ENCODE measurements at regions of chr9 and their contacts with region 1.

Region 1: DNA sequence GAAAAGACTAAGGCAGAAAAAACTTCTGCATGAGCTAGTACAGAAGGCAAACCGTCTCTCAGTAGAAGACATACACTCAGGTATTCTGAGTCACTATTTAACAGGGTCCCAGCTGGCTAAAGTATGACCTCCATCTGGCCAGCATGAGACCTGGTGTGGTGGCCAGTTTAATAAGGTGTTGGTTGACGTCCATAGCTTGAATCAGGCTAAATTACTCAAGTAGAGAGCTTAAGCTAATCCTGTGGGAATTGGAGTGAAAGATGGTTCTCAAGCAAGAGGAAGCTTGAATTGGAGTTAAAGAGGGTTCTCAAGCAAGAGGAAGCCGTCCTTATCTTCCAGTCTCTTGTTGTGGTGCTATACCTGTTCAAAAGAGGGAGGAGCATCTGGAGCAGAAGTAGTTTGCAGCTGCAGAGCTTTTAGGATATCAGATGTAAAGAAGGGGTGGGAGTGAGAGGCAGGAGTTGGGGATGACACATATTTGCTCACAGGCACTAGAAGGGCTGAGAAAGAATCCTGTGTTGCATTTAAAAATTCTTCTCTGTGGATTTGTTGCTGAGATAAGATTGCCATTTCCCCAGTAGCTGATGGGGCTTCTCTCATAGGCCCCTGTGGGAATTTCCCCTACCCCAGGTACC is 136.1 kb upstream of the RUSC2 start:
- DNase-seq: no peak
- H3K4me3 ChIP-seq: no peak overlapping the region
- H3K27ac ChIP-seq: no peak overlapping the region
- H3K4me1 ChIP-seq: no peaks in the 10 kb centered on the region
- H3K27me3 ChIP-seq: no peaks in the 10 kb centered on the region
- CTCF ChIP-seq: no peak
- EP300 ChIP-seq: no peak
- POLR2A ChIP-seq: no peak
- RAD21 ChIP-seq: no peak

Region 2: GRCh38 chr9:35116898-35117551 is 236.8 kb before region 1 on chr9:
- CTCF ChIA-PET with region 1: interaction called, 12 read pairs
- POLR2A ChIA-PET with region 1: no interaction called
- DNase-seq: peak; percentile 83 to 87
- H3K4me3 ChIP-seq: peak overlapping the region; percentile 49 to 79 (median 65); a peak in 7 of 8 replicates
- H3K27ac ChIP-seq: no peak overlapping the region
- H3K4me1 ChIP-seq: peaks cover 4 to 19% (median 10%) of the 10 kb centered on the region in 4 experiments; a peak in 6 of 7 replicates
- H3K27me3 ChIP-seq: no peaks in the 10 kb centered on the region
- CTCF ChIP-seq: peak; percentile 90 to 98 (median 90)
- EP300 ChIP-seq: no peak
- POLR2A ChIP-seq: peak in 1 of 2 experiments; percentile 51; a peak in 1 of 3 replicates
- RAD21 ChIP-seq: peak; percentile 93 to 95

Region 3: GRCh38 chr9:35341585-35341984 is 12.3 kb before region 1 on chr9:
- CTCF ChIA-PET with region 1: interaction called, 13 read pairs
- POLR2A ChIA-PET with region 1: interaction called, 4 read pairs
- DNase-seq: no peak
- H3K4me3 ChIP-seq: no peak overlapping the region
- H3K27ac ChIP-seq: no peak overlapping the region
- H3K4me1 ChIP-seq: peaks cover 0 to 4% (median 0%) of the 10 kb centered on the region in 4 experiments; a peak in 3 of 7 replicates
- H3K27me3 ChIP-seq: no peaks in the 10 kb centered on the region
- CTCF ChIP-seq: no peak
- EP300 ChIP-seq: no peak
- POLR2A ChIP-seq: no peak
- RAD21 ChIP-seq: no peak

Measured in H1 (cell line).